HepG2 (cell line): ENCODE measurements at regions of chr17 and their contacts with region 1.

Region 1: GRCh38 chr17:28230011-28230410 is 89.0 kb upstream of the TMEM97 start:
- DNase-seq: no peak
- ATAC-seq: no peak
- H3K4me3 ChIP-seq: no peak overlapping the region
- H3K27ac ChIP-seq: no peak overlapping the region
- H3K4me1 ChIP-seq: peaks cover 14% of the 10 kb centered on the region
- H3K27me3 ChIP-seq: peaks cover 0 to 5% of the 10 kb centered on the region in 2 experiments; a peak in 1 of 5 replicates
- CTCF ChIP-seq: no peak
- EP300 ChIP-seq: no peak
- POLR2A ChIP-seq: no peak
- RAD21 ChIP-seq: no peak

Region 2: GRCh38 chr17:28180449-28180848 is 49.6 kb before region 1 on chr17:
- CTCF ChIA-PET with region 1: no interaction called
- POLR2A ChIA-PET with region 1: no interaction called
- in situ Hi-C with region 1: no loop called
- intact Hi-C with region 1: no loop called
- DNase-seq: no peak
- ATAC-seq: no peak
- H3K4me3 ChIP-seq: no peak overlapping the region
- H3K27ac ChIP-seq: no peak overlapping the region
- H3K4me1 ChIP-seq: peaks cover 7% of the 10 kb centered on the region
- H3K27me3 ChIP-seq: no peaks in the 10 kb centered on the region
- CTCF ChIP-seq: no peak
- EP300 ChIP-seq: no peak
- POLR2A ChIP-seq: no peak
- RAD21 ChIP-seq: no peak

Region 3: DNA sequence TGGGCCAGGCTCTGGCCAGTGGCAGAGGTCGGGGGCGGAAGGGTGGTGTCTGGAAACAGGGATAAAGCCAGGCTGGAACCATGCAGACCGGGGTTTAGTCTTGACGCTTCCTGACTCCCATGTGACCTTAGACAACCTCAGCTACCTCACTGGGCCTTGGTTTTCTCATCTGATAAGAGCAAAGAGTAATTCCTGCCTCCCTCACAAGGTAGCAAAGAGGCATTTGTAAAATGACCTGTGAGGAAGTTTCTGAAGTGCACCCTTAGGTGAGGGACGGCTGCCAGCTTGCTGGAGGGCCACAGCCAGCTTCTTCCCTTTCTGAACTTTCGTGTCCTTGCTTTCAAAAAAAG is 11.0 kb after region 1 on chr17:
- CTCF ChIA-PET with region 1: no interaction called
- POLR2A ChIA-PET with region 1: no interaction called
- in situ Hi-C with region 1: no loop called
- intact Hi-C with region 1: no loop called
- DNase-seq: no peak
- ATAC-seq: no peak
- H3K4me3 ChIP-seq: no peak overlapping the region
- H3K27ac ChIP-seq: no peak overlapping the region
- H3K4me1 ChIP-seq: no peaks in the 10 kb centered on the region
- H3K27me3 ChIP-seq: peaks cover under 1 to 8% of the 10 kb centered on the region in 2 experiments; a peak in 2 of 5 replicates
- CTCF ChIP-seq: no peak
- EP300 ChIP-seq: no peak
- POLR2A ChIP-seq: no peak
- RAD21 ChIP-seq: no peak

Region 4: DNA sequence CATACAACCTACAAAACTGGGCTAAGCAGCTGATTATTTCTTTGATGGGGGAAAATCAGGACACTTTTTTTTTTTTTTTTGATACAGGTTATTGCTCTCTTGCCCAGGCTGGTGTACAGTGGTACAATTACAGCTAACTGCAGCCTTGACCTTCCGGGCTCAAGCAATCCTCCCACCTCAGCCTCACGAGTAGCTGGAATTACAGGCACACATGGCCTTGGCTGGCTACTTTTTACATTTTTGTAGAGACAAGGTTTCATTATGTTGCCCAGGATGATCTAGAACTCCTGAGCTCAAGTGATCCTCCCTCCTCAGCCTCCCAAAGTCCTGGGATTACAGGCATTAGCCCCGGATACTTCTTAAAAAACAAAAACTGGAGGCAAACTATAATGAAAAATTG is 68.4 kb after region 1 on chr17:
- CTCF ChIA-PET with region 1: no interaction called
- POLR2A ChIA-PET with region 1: no interaction called
- in situ Hi-C with region 1: no loop called
- intact Hi-C with region 1: no loop called
- DNase-seq: no peak
- ATAC-seq: no peak
- H3K4me3 ChIP-seq: no peak overlapping the region
- H3K27ac ChIP-seq: no peak overlapping the region
- H3K4me1 ChIP-seq: 0 out of 2 replicates have a peak, but pooled peaks cover 4% of the 10 kb centered on the region
- H3K27me3 ChIP-seq: no peaks in the 10 kb centered on the region
- CTCF ChIP-seq: no peak
- EP300 ChIP-seq: no peak
- POLR2A ChIP-seq: no peak
- RAD21 ChIP-seq: no peak

Region 5: DNA sequence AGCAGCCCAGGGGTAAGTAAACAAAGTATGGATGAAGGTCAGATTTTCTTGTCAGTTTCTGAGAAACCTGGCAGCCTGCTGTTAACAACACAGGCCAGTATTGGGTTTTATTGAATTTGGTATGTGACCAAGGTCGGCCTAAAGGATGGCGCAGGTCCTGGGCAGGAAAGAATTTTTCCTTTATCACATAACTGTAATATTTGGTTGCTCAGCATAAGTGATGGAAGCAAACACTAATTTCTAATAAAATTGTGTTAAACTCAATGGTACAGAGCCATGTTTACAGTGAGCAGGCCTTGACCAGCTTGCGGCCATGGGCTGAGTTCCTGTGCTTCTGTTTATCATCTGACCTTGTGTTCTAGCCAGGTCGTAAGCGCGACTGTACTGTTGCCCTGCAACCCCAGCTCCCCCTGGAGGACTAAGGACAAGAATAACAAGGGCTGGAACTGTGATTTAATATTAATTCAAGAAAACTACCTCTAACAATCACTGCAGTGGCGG is 116.8 kb after region 1 on chr17:
- CTCF ChIA-PET with region 1: no interaction called
- POLR2A ChIA-PET with region 1: no interaction called
- in situ Hi-C with region 1: no loop called
- intact Hi-C with region 1: loop called (anchors 5 kb)
- DNase-seq: peak; percentile 69
- ATAC-seq: peak; percentile 86
- H3K4me3 ChIP-seq: no peak overlapping the region
- H3K27ac ChIP-seq: peak overlapping the region; percentile 43
- H3K4me1 ChIP-seq: peaks cover 26% of the 10 kb centered on the region
- H3K27me3 ChIP-seq: no peaks in the 10 kb centered on the region
- CTCF ChIP-seq: peak; percentile 84
- EP300 ChIP-seq: peak in 1 of 2 experiments; percentile 37; a peak in 2 of 4 replicates
- POLR2A ChIP-seq: no peak
- RAD21 ChIP-seq: peak; percentile 62; the same call in 1 of the 2 replicates

Region 6: GRCh38 chr17:28416703-28417311 is 186.8 kb after region 1 on chr17:
- CTCF ChIA-PET with region 1: interaction called, 3 read pairs
- POLR2A ChIA-PET with region 1: no interaction called
- in situ Hi-C with region 1: no loop called
- intact Hi-C with region 1: loop called (anchors 10 kb)
- DNase-seq: peak; percentile 87
- ATAC-seq: peak; percentile 99
- H3K4me3 ChIP-seq: no peak overlapping the region; a peak in 1 of 6 replicates
- H3K27ac ChIP-seq: no peak overlapping the region
- H3K4me1 ChIP-seq: peaks cover 22% of the 10 kb centered on the region
- H3K27me3 ChIP-seq: 0 out of 5 replicates have a peak, but pooled peaks cover 0 to 7% of the 10 kb centered on the region in 2 experiments
- CTCF ChIP-seq: peak; percentile 96
- EP300 ChIP-seq: no peak
- POLR2A ChIP-seq: no peak
- RAD21 ChIP-seq: peak; percentile 83